ENCODE measurements at regions of chr11 and their contacts with region 1.

Region 1: DNA sequence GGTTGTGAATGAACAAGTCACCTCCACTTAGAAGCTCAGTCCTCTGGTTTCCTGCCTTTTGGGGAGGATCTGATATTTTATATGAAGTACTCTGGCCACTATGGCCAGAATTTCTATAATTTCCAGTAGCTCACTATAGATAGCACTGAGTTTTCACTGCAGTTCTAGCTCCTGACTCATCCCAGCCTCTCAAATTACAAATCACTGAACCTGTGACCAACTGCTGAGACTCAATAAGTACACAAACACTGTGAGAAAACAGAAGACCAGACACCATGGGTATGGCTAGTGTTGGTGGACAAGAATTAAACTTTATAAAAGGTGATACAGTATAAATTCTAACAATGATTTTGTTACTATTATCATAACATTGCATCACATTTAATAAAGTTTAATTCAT is 47.1 kb upstream of the UCP3 start:
- DNase-seq: peak; percentile 91
- ATAC-seq: peak; percentile 99
- H3K4me3 ChIP-seq: peak overlapping the region; percentile 5; the same call in 1 of the 2 replicates
- H3K27ac ChIP-seq: peak overlapping the region; percentile 69
- H3K4me1 ChIP-seq: peaks cover 31% of the 10 kb centered on the region
- H3K27me3 ChIP-seq: no peaks in the 10 kb centered on the region
- CTCF ChIP-seq: no peak

Region 2: GRCh38 chr11:74018331-74019005 is 37.5 kb before region 1 on chr11:
- CTCF ChIA-PET with region 1: no interaction called
- POLR2A ChIA-PET with region 1: interaction called, 16 read pairs
- intact Hi-C with region 1: no loop called
- DNase-seq: peak; percentile 88
- ATAC-seq: peak; percentile 94
- H3K4me3 ChIP-seq: no peak overlapping the region
- H3K27ac ChIP-seq: peak overlapping the region; percentile 78
- H3K4me1 ChIP-seq: peaks cover 16% of the 10 kb centered on the region
- H3K27me3 ChIP-seq: no peaks in the 10 kb centered on the region
- CTCF ChIP-seq: no peak

Region 3: GRCh38 chr11:74044538-74044937 is 11.4 kb before region 1 on chr11:
- CTCF ChIA-PET with region 1: no interaction called
- POLR2A ChIA-PET with region 1: no interaction called
- intact Hi-C with region 1: no loop called
- DNase-seq: no peak
- ATAC-seq: no peak
- H3K4me3 ChIP-seq: no peak overlapping the region
- H3K27ac ChIP-seq: no peak overlapping the region
- H3K4me1 ChIP-seq: no peaks in the 10 kb centered on the region
- H3K27me3 ChIP-seq: no peaks in the 10 kb centered on the region
- CTCF ChIP-seq: no peak

Region 4: DNA sequence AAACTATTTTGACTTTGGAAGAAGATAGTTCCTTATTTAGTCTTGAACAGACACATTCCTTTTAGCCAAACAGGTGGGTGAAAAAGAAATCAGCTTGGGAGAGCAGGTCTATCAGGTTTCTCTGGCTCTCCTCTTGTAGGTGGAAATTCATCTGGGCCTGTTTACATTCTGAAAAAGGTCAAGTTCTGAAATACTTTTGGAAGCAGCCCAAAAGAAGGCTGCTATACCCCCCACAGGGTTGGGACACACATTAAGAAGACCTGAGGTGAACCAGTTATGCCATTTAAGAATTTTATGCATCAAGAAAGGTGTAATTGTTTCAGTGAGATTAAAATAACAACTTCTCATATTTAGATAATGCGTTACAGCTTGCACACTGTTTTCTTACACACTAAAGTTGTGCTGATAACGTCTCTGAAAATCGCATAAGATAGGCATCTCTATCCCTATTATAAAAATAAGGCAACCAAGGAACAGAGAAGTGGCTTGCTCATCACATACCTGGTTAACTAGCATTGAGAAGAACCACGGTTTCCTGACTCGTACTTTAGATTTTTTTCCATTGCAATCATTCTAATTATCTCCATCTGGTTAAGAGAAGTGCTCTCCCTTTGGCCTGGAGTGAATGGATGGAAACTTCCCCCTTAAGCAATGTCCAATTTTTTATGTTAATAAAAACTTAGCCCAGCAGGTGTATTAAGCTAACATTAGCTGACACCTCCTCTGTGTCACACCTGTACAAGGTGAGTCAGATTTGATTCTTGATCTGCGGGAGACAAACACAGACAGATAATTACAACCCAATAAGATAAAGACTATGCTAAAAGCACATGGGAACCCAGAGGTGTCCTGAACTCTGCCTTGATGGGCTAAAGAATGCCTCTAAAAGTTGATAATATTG is 13.5 kb after region 1 on chr11:
- CTCF ChIA-PET with region 1: no interaction called
- POLR2A ChIA-PET with region 1: no interaction called
- intact Hi-C with region 1: loop called (anchors 2 kb)
- DNase-seq: peak; percentile 95
- ATAC-seq: peak; percentile 5; the same call in 1 of the 2 replicates
- H3K4me3 ChIP-seq: no peak overlapping the region; the same call in 1 of the 2 replicates
- H3K27ac ChIP-seq: peak overlapping the region; percentile 90
- H3K4me1 ChIP-seq: peaks cover 59% of the 10 kb centered on the region
- H3K27me3 ChIP-seq: no peaks in the 10 kb centered on the region
- CTCF ChIP-seq: no peak

Region 5: GRCh38 chr11:74085542-74085892 is 29.6 kb after region 1 on chr11:
- CTCF ChIA-PET with region 1: no interaction called
- POLR2A ChIA-PET with region 1: no interaction called
- intact Hi-C with region 1: loop called (anchors 2 kb)
- DNase-seq: peak; percentile 21
- ATAC-seq: peak; percentile 38; the same call in 1 of the 2 replicates
- H3K4me3 ChIP-seq: no peak overlapping the region
- H3K27ac ChIP-seq: peak overlapping the region; percentile 21
- H3K4me1 ChIP-seq: peaks cover 15% of the 10 kb centered on the region
- H3K27me3 ChIP-seq: no peaks in the 10 kb centered on the region
- CTCF ChIP-seq: no peak

Region 6: DNA sequence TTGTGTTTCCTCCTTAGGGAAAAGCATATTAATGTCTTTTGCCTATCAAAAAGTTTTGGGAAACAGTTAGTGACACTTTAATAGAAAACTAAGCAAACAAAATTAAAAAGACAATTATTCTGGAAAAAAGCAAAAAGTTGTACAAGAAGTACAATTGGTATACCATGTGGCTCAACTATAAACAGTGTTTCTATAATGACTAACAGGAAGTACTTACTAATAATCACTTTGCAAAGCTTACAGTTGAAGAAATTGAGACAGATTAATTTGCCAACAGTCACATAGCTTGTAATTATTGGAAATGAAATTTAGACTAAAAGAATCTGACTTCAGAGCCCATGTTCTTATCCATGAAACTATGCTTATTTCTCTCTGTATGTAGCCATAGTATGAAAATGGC is 139.9 kb after region 1 on chr11:
- CTCF ChIA-PET with region 1: no interaction called
- POLR2A ChIA-PET with region 1: no interaction called
- intact Hi-C with region 1: no loop called
- DNase-seq: peak; percentile 28
- ATAC-seq: peak; percentile 66
- H3K4me3 ChIP-seq: no peak overlapping the region
- H3K27ac ChIP-seq: no peak overlapping the region
- H3K4me1 ChIP-seq: peaks cover 16% of the 10 kb centered on the region
- H3K27me3 ChIP-seq: no peaks in the 10 kb centered on the region
- CTCF ChIP-seq: no peak